ENCODE measurements at regions of chr19 and their contacts with region 1.

Region 1: DNA sequence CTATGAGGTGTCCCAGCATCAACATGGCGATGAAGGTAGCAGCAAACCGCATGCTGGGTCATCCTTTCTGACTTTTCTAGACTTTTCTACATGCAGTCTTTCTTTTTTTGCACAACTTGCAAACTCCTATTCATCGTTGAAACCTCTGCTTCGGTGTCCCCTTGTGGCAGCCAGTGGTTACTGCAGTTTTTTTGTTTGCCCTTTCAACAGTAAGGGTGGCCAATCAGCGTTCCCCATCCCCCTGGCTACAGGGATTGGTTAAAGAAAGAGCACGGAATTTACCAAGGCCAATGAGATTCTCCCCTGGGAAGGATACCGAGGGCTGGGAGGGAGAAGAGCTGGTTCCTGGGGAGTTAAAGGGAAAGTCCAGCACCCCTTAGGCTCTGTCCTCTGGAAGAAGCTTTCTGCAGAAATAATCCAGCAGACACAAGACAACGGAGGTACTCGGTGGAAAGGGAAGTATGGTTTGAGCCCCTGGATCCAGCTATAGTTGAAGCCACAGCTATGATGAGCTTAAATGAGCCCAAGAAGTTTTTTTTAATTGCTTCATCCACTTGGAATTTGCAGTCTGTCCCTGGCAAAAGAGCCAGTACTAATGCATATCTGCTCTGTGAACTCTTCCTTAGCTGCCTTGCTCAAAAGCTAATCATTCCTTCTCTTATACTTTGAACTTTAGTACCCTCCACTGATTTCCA is 5.6 kb upstream of the LSM4 start:
- DNase-seq: peak; percentile 97
- H3K4me3 ChIP-seq: peak overlapping the region in 2 of 3 experiments; percentile 24 to 37
- H3K27ac ChIP-seq: no peak overlapping the region
- H3K4me1 ChIP-seq: peaks cover 13% of the 10 kb centered on the region
- H3K27me3 ChIP-seq: no peaks in the 10 kb centered on the region
- CTCF ChIP-seq: peak; percentile 88 to 94

Region 2: DNA sequence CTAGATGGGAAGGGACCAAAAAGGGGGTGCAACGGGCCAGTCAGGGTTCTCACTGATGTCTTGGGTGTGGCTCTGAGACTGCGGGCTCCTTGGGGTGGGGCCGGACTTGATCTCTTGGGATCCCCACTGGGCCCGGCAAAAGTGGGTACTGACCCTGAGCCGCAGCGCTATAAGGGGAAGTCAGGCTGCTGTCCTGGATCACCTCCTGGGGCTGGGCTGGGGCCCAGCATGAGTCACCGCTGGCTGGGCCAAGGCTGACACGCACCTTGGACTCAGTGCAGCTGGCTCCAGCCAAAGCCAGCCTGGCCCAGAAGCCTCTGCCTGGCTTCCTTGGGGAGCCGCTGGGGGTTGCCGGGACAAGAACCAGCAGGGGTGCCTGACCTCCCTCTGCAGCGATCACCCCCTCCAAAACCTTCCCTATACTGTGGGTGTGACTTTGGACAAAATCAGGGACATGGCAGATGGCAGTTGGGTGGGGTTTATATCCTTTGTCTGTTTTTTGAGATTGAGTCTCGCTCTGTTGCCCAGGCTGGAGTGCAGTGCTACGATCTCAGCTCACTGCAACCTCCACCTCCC is 53.6 kb before region 1 on chr19:
- CTCF ChIA-PET with region 1: interaction called, 28 read pairs
- dilution Hi-C with region 1: no loop called
- in situ Hi-C with region 1: loop called (anchors 5 to 10 kb)
- intact Hi-C with region 1: loop called (anchors 1 kb)
- DNase-seq: peak; percentile 86
- H3K4me3 ChIP-seq: no peak overlapping the region
- H3K27ac ChIP-seq: peak overlapping the region; percentile 27
- H3K4me1 ChIP-seq: peaks cover 33% of the 10 kb centered on the region
- H3K27me3 ChIP-seq: no peaks in the 10 kb centered on the region
- CTCF ChIP-seq: no peak